ENCODE measurements at regions of chr17 and their contacts with region 1.

Region 1: GRCh38 chr17:80791758-80792284 is 199.8 kb upstream of the CHMP6 start:
- DNase-seq: peak; percentile 76
- ATAC-seq: peak; percentile 65
- H3K4me3 Mint-ChIP-seq: peak overlapping the region; percentile 56
- H3K27ac Mint-ChIP-seq: peak overlapping the region; percentile 97
- H3K4me1 Mint-ChIP-seq: peaks cover 88% of the 10 kb centered on the region
- H3K27me3 Mint-ChIP-seq: no peaks in the 10 kb centered on the region

Region 2: GRCh38 chr17:80124351-80124981 is 667.4 kb before region 1 on chr17:
- CTCF ChIA-PET with region 1: no interaction called
- POLR2A ChIA-PET with region 1: no interaction called
- intact Hi-C with region 1: no loop called
- DNase-seq: no peak
- ATAC-seq: no peak
- H3K4me3 Mint-ChIP-seq: no peak overlapping the region
- H3K27ac Mint-ChIP-seq: no peak overlapping the region
- H3K4me1 Mint-ChIP-seq: no peaks in the 10 kb centered on the region
- H3K27me3 Mint-ChIP-seq: peaks cover 10% of the 10 kb centered on the region

Region 3: GRCh38 chr17:80675438-80676095 is 116.3 kb before region 1 on chr17:
- CTCF ChIA-PET with region 1: no interaction called
- POLR2A ChIA-PET with region 1: no interaction called
- intact Hi-C with region 1: loop called in 1 of 2 experiments (anchors 5 kb)
- DNase-seq: no peak
- ATAC-seq: no peak
- H3K4me3 Mint-ChIP-seq: no peak overlapping the region
- H3K27ac Mint-ChIP-seq: peak overlapping the region; percentile 79
- H3K4me1 Mint-ChIP-seq: peaks cover 74% of the 10 kb centered on the region
- H3K27me3 Mint-ChIP-seq: no peaks in the 10 kb centered on the region

Region 4: GRCh38 chr17:80780381-80781198 is 11.2 kb before region 1 on chr17:
- CTCF ChIA-PET with region 1: interaction called, 5 read pairs
- POLR2A ChIA-PET with region 1: interaction called, 3 read pairs
- intact Hi-C with region 1: loop called in 1 of 2 experiments (anchors 1 kb)
- DNase-seq: peak; percentile 60
- ATAC-seq: peak; percentile 49
- H3K4me3 Mint-ChIP-seq: peak overlapping the region; percentile 29
- H3K27ac Mint-ChIP-seq: peak overlapping the region; percentile 95
- H3K4me1 Mint-ChIP-seq: peaks cover 80% of the 10 kb centered on the region
- H3K27me3 Mint-ChIP-seq: no peaks in the 10 kb centered on the region

Region 5: GRCh38 chr17:80832888-80833583 is 41.2 kb after region 1 on chr17:
- CTCF ChIA-PET with region 1: no interaction called
- POLR2A ChIA-PET with region 1: interaction called, 5 read pairs
- intact Hi-C with region 1: loop called (anchors 1 to 2 kb)
- DNase-seq: peak; percentile 92
- ATAC-seq: peak; percentile 90
- H3K4me3 Mint-ChIP-seq: peak overlapping the region; percentile 70
- H3K27ac Mint-ChIP-seq: peak overlapping the region; percentile 95
- H3K4me1 Mint-ChIP-seq: peaks cover 44% of the 10 kb centered on the region
- H3K27me3 Mint-ChIP-seq: no peaks in the 10 kb centered on the region

Region 6: DNA sequence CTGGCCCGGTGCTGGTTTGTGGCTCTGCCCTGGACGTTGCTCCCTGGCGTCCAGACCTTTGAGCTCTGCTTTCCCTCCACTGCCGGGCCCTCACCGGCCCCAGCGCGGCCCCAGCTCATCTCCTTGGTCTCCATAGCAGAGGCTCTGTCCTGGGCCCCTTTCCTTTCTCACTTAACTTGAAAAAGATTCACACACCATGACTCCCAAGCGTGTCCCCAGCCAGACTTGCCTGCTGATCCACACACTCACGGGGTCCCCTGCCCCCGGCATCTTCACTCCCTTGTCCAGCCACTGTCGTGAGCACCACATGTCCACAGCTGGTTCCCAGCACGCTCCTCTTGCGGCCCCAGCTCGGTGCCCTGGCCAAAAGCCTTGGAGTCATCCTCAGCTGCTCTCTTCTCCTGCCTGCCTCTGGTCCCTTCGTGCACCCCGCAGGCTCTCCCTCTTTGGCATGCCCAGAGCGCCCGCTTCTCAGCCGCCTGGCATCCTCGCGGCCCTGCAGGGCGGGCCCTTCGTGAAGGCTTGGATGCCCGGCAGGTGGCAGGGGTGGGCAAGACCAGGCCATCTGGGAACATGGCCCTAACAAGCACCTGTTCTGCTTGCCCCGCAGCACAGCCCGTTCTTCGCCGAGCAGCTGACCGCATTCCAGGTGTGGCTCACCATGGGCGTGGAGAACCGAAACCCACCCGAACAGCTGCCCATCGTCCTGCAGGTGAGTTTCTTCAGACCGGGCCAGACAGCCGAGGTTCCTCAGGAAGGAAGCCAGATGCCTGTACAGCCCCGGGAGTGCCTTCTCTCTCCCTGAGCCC is 54.2 kb after region 1 on chr17:
- CTCF ChIA-PET with region 1: no interaction called
- POLR2A ChIA-PET with region 1: interaction called, 14 read pairs
- intact Hi-C with region 1: no loop called
- DNase-seq: no peak
- ATAC-seq: no peak
- H3K4me3 Mint-ChIP-seq: no peak overlapping the region
- H3K27ac Mint-ChIP-seq: peak overlapping the region; percentile 93
- H3K4me1 Mint-ChIP-seq: peaks cover 49% of the 10 kb centered on the region
- H3K27me3 Mint-ChIP-seq: no peaks in the 10 kb centered on the region

Region 7: GRCh38 chr17:80855948-80856862 is 64.4 kb after region 1 on chr17:
- CTCF ChIA-PET with region 1: interaction called, 4 read pairs
- POLR2A ChIA-PET with region 1: no interaction called
- intact Hi-C with region 1: loop called in 1 of 2 experiments (anchors 1 kb)
- DNase-seq: peak; percentile 95
- ATAC-seq: peak; percentile 98
- H3K4me3 Mint-ChIP-seq: peak overlapping the region; percentile 28
- H3K27ac Mint-ChIP-seq: peak overlapping the region; percentile 92
- H3K4me1 Mint-ChIP-seq: peaks cover 57% of the 10 kb centered on the region
- H3K27me3 Mint-ChIP-seq: no peaks in the 10 kb centered on the region

Region 8: GRCh38 chr17:80876950-80877728 is 85.3 kb after region 1 on chr17:
- CTCF ChIA-PET with region 1: no interaction called
- POLR2A ChIA-PET with region 1: no interaction called
- intact Hi-C with region 1: loop called (anchors 1 to 5 kb)
- DNase-seq: peak; percentile 84
- ATAC-seq: peak; percentile 93
- H3K4me3 Mint-ChIP-seq: peak overlapping the region; percentile 51
- H3K27ac Mint-ChIP-seq: peak overlapping the region; percentile 99
- H3K4me1 Mint-ChIP-seq: peaks cover 68% of the 10 kb centered on the region
- H3K27me3 Mint-ChIP-seq: no peaks in the 10 kb centered on the region